Posterior vena cava (tissue), 2 donors: ENCODE measurements at regions of chr10 and their contacts with region 1.

Region 1: DNA sequence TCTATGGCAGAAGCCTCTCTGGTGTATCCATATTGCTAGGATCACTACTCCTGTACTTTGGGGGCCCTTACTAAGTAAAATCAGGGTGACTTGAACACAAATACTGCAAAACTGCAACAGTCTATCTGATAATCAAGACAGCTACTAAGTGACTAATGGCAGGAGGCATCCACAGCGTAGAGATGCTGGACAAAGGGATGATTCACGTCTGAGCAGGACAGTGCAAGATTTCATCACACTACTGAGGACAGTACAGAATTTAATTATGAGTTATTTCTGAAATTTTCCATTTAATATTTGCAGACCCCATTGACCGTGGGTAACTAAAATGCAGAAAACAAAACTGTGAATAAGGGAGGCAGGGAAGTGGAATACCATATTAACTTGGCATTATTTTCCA is 10.4 kb downstream of the CUL2 start:
- DNase-seq: no peak

Region 2: DNA sequence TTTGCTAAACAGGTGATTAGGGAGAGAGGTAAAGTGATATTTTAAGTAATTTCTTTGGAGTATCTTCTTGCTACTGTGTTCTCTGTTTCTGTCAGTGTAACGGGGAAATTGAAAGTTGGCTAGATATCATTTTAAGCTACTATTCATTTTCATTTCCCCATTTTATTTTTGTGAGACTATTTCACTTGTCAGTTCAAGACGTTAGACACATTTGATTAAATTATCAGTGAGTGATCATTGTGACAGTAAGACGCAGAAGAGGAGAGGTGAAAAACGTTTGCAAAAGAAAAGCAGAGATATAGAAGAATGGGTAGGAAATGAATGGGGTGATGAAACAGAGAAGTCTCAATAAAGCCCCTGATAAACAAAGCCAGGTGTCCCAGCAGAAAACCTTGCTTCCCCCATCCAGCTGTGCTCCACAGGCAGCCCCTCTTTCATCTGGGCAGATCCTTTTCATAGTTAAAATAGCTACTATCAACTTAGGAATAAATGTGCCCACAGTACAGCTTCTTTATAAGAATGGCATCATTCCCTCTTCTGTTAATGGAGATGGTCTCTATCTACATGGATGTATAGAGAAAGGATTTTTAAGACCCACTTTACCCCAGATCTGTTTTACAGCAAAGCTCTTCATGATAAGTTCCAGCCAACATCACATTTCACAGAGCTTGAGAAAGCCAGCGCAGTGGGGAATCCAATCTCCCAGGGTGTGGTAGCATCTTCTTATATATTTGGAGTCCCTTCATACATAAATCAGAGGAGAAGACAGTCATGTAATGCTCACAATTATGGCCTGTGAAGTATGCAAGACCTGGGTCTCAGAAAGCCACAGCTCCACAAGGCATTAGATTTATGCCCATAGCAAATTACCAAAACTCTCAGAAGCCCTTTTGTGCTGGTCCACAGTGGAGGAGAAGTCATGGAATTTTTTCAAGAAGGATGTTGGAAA is 1983.6 kb before region 1 on chr10:
- intact Hi-C with region 1: loop called in 1 of 2 experiments (anchors 5 kb)
- DNase-seq: no peak